ENCODE measurements at regions of chr11 and their contacts with region 1.

Region 1: GRCh38 chr11:250740-251299 is 14.0 kb downstream of the PSMD13 start:
- DNase-seq: peak; percentile 91
- ATAC-seq: peak; percentile 98
- H3K4me3 Mint-ChIP-seq: no peak overlapping the region
- H3K27ac Mint-ChIP-seq: peak overlapping the region; percentile 82
- H3K4me1 Mint-ChIP-seq: peaks cover 18% of the 10 kb centered on the region
- H3K27me3 Mint-ChIP-seq: no peaks in the 10 kb centered on the region
- CTCF ChIP-seq: peak; percentile 83

Region 2: GRCh38 chr11:223026-223789 is 27.6 kb before region 1 on chr11:
- CTCF ChIA-PET with region 1: interaction called, 28 read pairs
- POLR2A ChIA-PET with region 1: no interaction called
- intact Hi-C with region 1: no loop called
- DNase-seq: no peak
- ATAC-seq: no peak
- H3K4me3 Mint-ChIP-seq: no peak overlapping the region
- H3K27ac Mint-ChIP-seq: no peak overlapping the region
- H3K4me1 Mint-ChIP-seq: peaks cover 8% of the 10 kb centered on the region
- H3K27me3 Mint-ChIP-seq: no peaks in the 10 kb centered on the region
- CTCF ChIP-seq: no peak

Region 3: GRCh38 chr11:279966-280582 is 29.3 kb after region 1 on chr11:
- CTCF ChIA-PET with region 1: interaction called, 71 read pairs
- POLR2A ChIA-PET with region 1: interaction called, 11 read pairs
- intact Hi-C with region 1: no loop called
- DNase-seq: peak; percentile 67
- ATAC-seq: peak; percentile 28
- H3K4me3 Mint-ChIP-seq: peak overlapping the region; percentile 82
- H3K27ac Mint-ChIP-seq: peak overlapping the region; percentile 68
- H3K4me1 Mint-ChIP-seq: peaks cover 54% of the 10 kb centered on the region
- H3K27me3 Mint-ChIP-seq: peaks cover 10% of the 10 kb centered on the region
- CTCF ChIP-seq: no peak

Region 4: DNA sequence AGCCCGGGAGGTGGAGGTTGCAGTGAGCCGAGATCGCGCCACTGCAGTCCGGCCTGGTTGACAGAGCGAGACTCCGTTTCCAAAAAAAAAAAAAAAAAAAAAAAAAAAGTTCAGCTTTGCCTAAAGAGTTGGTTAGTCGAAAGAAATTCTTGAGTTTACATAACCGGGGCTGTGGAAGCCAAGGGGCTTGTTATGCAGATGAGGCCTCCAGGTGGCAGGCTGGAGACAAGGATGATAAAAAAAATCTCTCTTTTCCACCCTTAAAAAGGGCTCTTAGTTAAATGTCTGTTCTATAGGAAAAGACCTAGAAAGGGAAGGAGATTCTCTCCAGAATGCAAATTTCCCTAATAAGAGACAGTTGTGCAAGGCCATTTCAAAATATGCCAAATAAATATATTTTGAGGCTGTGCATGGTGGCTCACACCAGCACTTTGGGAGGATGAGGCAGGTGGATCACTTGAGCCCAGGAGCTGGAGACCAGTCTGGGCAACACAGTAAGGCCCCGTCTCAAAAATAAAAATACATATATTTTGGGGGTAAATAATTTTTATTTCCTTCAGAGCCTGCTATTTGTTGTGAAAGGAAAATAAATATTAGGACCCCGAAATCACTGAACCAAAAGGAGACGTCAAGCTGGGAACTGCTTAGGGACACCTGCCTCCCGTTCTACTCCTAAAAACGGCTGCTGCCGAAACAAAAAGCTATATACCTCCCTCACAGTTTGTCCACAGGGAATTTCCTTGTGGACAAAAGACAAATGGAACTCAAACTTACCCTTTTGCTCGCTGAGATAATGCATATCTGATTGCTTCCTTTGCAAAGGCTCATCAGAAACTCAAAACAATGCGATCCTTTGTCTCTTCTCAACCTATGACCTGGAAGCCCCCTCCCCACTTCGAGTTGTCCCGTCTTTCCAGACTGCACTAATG is 54.4 kb after region 1 on chr11:
- CTCF ChIA-PET with region 1: interaction called, 51 read pairs
- POLR2A ChIA-PET with region 1: interaction called, 6 read pairs
- intact Hi-C with region 1: no loop called
- DNase-seq: peak; percentile 85
- ATAC-seq: peak; percentile 25
- H3K4me3 Mint-ChIP-seq: no peak overlapping the region
- H3K27ac Mint-ChIP-seq: no peak overlapping the region
- H3K4me1 Mint-ChIP-seq: peaks cover 49% of the 10 kb centered on the region
- H3K27me3 Mint-ChIP-seq: peaks cover 5% of the 10 kb centered on the region
- CTCF ChIP-seq: peak; percentile 86

Region 5: DNA sequence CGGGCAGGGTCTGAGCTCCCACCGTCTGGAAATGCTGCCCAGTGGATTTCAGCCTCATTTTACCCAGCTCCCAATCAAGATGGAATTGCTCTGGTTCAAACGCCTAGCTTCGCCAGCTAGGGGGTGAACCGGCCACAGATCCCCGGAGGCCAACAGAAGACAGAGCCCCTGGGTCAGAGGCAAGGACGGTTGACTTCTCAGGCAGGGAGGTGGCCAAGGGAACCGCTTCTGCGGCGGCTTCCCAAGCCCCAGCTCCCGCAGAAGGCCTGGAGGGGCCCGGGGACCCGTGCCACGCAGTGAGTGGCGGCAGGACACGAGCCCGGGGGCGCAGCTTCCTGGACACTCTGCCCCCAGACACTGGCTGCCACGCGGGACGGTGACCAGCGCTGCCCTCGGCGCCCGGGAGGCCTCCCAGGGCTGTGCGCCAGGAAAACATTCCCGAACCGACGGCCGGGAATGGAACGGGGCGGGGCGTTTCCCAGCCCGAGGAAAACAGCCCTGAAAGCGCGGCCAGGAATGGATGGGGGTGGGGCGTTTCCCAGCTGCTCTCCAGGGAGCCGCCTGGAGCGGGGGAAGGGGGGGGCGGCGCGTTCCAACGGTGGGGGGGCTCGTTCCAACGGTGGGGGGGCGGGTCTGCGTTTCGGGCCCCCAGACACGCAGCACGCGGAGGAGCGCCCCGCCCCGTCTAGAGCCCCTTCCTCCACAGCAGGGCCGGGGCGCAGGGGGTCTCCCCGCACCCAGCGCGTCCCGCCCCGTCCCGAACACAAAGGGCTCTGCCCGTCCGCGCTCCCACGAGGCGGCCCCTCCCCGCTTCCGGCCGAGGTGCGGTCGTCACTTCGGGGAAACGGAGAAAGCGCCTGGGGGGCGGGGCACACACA is 105.0 kb after region 1 on chr11:
- CTCF ChIA-PET with region 1: interaction called, 17 read pairs
- POLR2A ChIA-PET with region 1: no interaction called
- intact Hi-C with region 1: no loop called
- DNase-seq: peak; percentile 91
- ATAC-seq: peak; percentile 72
- H3K4me3 Mint-ChIP-seq: peak overlapping the region; percentile 83
- H3K27ac Mint-ChIP-seq: peak overlapping the region; percentile 96
- H3K4me1 Mint-ChIP-seq: peaks cover 42% of the 10 kb centered on the region
- H3K27me3 Mint-ChIP-seq: no peaks in the 10 kb centered on the region
- CTCF ChIP-seq: no peak

Measured in activated CD8-positive, alpha-beta T cell treated with anti-CD3 and anti-CD28 coated beads for 36 hours (primary cell).